ENCODE measurements at regions of chr5 and their contacts with region 1.

Region 1: DNA sequence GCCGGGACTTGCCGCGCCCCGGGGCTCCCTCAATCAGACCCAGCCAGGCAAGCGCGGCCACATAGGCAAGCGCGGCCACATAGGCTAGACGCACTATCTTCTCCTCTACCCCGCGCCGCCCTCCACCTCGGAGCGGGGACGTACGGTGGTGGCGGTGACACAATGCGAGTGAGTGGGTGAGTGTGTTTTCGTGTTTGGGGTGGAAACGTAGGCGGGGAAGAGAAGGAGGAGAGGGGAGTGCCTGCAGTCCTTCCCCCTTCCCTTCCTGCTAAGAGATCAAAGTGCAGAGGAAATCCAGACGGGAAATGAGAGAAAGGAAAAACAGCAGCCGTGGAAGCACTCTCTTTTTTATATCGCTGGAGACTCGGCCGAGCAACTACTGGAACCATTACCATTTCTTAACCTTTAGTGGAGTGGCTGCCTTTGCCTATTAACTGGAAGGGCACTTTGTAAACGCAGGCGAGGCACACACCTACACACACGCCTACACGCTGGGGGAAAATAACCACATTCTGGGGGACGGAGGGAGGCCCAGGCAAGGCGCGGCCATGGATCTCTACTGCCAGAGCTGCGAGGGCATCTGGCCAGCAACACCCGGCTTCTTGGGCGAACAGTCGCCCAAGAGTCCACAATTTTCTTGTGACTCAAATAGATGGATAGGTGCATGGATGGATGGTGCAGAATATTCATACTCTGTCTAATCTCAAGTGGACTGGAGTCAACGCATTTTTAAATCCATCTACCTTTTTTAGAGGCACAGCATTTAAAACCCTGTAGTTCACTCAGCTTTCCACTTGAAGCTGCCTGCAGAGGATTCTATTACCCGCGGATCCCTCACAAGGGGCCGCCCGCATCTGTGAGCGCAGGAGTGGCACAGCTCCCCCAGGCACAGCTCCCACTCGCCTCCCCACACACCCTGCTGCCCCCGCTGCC is 2.1 kb downstream of the EDIL3 start:
- DNase-seq: peak in 6 of 7 donors; percentile 22 to 62 (median 33)
- H3K4me3 ChIP-seq: peak overlapping the region in 2 of 4 donors; percentile 41 to 59
- H3K27ac ChIP-seq: peak overlapping the region in 3 of 5 donors; percentile 26 to 67 (median 64)
- H3K4me1 ChIP-seq: no peaks in the 10 kb centered on the region
- H3K27me3 ChIP-seq: peaks cover 16% of the 10 kb centered on the region
- CTCF ChIP-seq: no peak
- POLR2A ChIP-seq: peak in 1 of 2 donors; percentile 65

Region 2: DNA sequence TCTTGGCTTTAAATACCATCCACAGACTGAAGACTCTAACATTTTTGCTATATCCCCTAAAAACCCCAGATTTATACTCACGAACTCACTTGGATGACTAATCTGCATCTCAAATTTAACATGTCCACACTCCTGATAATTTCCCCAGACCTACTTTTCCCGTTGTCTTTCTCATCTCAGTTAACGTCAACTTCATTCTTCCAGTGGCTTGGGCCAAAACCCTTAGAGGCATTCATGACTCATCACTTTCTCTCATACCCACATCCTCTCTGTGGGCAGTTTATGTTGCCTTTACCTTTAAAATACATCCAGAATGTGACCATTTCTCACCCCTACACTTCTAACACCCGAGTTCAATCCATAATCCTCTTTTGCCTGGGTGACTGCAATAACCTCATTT is 94.7 kb before region 1 on chr5:
- intact Hi-C with region 1: loop called in 1 of 2 experiments (anchors 10 kb)
- DNase-seq: no peak
- H3K4me3 ChIP-seq: no peak overlapping the region
- H3K27ac ChIP-seq: no peak overlapping the region
- H3K4me1 ChIP-seq: no peaks in the 10 kb centered on the region
- H3K27me3 ChIP-seq: no peaks in the 10 kb centered on the region
- CTCF ChIP-seq: no peak
- POLR2A ChIP-seq: no peak

Region 3: DNA sequence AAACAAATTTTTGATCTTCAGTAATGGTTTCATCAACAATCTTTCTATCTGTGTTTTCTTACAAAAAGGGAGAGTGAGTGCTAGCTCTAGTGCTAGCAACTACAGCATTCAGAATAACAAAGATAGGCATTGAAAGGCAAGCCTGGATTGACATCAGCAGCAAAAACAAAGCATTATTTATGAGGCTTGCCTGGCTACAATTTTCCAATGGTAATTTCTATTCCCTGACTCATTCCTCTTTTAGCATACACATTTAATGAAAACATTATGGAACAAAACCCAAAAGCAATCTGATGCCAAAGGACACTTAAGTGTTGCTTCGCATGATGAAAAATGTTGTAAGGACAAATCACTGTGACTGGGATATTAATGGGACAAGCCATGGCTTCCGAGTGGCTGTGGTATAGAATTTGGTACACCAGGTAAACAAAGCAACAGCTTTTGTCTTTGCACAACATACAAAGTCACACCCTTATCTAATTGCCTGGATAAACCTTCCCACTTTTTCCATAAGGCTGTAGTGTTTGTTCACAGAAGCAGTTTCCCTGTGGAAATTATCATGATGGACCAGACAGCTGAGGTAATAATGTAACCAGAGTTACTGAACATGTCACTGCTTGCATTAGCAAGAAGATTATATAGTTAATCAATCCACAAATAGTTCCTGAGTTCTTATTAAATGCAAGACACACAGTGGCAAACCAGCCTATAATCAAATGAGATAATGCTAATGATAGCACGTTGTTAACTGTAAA is 181.9 kb after region 1 on chr5:
- intact Hi-C with region 1: no loop called
- DNase-seq: no peak
- H3K4me3 ChIP-seq: no peak overlapping the region
- H3K27ac ChIP-seq: no peak overlapping the region
- H3K4me1 ChIP-seq: no peaks in the 10 kb centered on the region
- H3K27me3 ChIP-seq: no peaks in the 10 kb centered on the region
- CTCF ChIP-seq: no peak
- POLR2A ChIP-seq: no peak